IMR-90 (cell line): ENCODE measurements at regions of chr5 and their contacts with region 1.

Region 1: GRCh38 chr5:134833340-134834032 is 12.3 kb upstream of the C5orf24 start:
- DNase-seq: peak; percentile 86
- ATAC-seq: peak; percentile 92
- H3K4me3 ChIP-seq: no peak overlapping the region
- H3K27ac ChIP-seq: peak overlapping the region; percentile 98
- H3K4me1 ChIP-seq: peaks cover 11% of the 10 kb centered on the region
- H3K27me3 ChIP-seq: no peaks in the 10 kb centered on the region
- CTCF ChIP-seq: no peak
- POLR2A ChIP-seq: no peak
- RAD21 ChIP-seq: no peak

Region 2: DNA sequence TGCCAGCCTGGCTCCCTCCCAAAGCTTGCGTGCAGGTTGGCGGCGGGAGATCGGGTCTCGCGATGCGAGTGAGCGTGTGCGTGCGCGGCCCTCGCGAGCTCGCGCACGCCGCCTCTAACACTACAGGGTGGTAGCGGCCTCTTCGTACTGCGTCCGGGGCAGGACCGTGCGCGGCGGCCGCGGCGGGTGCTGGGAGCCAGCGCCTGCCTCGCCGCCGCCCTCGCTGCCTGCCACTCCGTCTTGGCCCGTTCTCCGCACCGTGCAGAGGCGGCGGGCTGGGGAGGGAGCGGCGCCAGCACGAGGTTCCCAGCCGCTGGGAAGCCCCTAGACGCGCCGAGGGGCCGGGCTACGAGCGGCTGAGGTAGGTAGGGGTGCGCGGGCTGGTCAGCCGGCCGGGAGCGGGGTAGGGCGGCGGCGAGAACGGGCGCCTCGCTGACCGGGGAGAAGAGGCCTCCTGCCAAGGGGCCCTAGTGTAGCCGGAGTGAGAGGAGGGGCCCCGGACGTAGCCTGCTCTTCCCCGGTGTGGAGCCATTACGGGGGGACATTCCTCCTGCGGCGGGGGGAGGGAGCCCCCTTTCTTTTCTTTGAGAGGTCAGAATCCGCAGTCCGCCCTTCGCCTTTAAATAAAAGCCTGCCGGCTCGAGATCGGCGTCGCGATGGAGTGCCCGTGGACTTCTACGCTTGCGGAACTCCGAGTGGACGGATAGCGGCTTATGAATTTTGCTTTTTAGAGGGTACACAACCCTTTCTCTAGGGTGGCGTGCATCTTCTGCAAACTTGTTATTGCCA is 12.6 kb after region 1 on chr5 and contains the start of gene C5orf24:
- CTCF ChIA-PET with region 1: no interaction called
- POLR2A ChIA-PET with region 1: interaction called, 4 read pairs
- dilution Hi-C with region 1: no loop called
- in situ Hi-C with region 1: no loop called
- intact Hi-C with region 1: loop called (anchors 1 kb)
- DNase-seq: peak; percentile 96
- ATAC-seq: peak; percentile 92
- H3K4me3 ChIP-seq: peak within 1 kb of the TSS; percentile 98
- H3K27ac ChIP-seq: peak within 1 kb of the TSS; percentile 89
- H3K4me1 ChIP-seq: peaks cover 16% of the 10 kb centered on the region
- H3K27me3 ChIP-seq: no peaks in the 10 kb centered on the region
- CTCF ChIP-seq: no peak
- POLR2A ChIP-seq: peak; percentile 95
- RAD21 ChIP-seq: no peak
- total RNA-seq, gene C5orf24: 29.8 and 53.9 TPM in 2 replicates